HepG2 (cell line): ENCODE measurements at regions of chr11 and their contacts with region 1.

Region 1: GRCh38 chr11:46006418-46007070 is 84.1 kb downstream of the LARGE2 start:
- DNase-seq: peak; percentile 71
- ATAC-seq: peak; percentile 84
- H3K4me3 ChIP-seq: no peak overlapping the region
- H3K27ac ChIP-seq: no peak overlapping the region
- H3K4me1 ChIP-seq: no peaks in the 10 kb centered on the region
- H3K27me3 ChIP-seq: no peaks in the 10 kb centered on the region
- CTCF ChIP-seq: peak; percentile 81
- EP300 ChIP-seq: no peak; a peak in 1 of 4 replicates
- POLR2A ChIP-seq: no peak
- RAD21 ChIP-seq: peak; percentile 24; the same call in 1 of the 2 replicates

Region 2: DNA sequence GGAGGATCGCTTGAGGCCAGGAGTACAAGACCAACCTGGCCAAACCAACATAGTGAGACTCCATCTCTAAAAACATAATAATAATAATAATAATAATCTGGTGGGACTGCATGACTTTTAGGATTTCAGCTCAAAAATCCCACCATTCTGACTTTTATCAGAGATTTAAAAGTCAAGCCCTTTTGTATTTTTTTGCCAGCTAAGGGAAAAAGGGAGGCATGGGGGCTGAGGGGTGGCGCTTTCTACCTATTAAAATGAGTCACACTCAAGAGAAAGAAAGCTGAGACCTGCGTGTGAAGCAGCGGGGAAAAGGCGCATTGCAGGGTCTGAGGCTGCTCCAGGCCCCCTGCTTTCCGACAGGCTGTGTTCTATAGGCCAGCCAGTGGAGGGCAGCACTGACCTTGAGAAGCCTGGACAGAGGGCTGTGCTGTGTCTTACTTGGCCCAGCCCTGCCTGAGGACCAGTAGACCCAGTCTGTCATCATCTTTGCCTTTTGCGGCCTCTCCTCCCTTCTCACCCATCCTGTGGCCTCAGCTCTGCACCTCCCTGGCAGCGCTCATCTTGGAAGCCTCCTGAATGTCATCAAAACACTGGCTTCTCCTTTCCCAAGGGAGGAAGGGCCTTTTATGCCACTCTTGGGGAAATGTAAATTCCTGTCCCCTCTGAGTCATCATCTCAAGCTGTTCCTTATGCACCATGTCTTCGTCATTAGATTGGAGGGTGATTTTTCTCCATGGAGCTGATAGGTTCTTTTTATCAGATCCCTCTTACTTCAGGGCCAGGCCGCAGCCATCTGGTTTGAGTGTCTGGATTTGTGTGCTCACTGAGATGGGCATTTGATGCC is 133.8 kb before region 1 on chr11:
- CTCF ChIA-PET with region 1: interaction called, 5 read pairs
- POLR2A ChIA-PET with region 1: no interaction called
- in situ Hi-C with region 1: no loop called
- intact Hi-C with region 1: loop called (anchors 1 kb)
- DNase-seq: peak; percentile 29
- ATAC-seq: peak; percentile 90
- H3K4me3 ChIP-seq: no peak overlapping the region
- H3K27ac ChIP-seq: no peak overlapping the region
- H3K4me1 ChIP-seq: no peaks in the 10 kb centered on the region
- H3K27me3 ChIP-seq: no peaks in the 10 kb centered on the region
- CTCF ChIP-seq: peak; percentile 83
- EP300 ChIP-seq: no peak
- POLR2A ChIP-seq: no peak
- RAD21 ChIP-seq: peak; percentile 69

Region 3: GRCh38 chr11:45964911-45965389 is 41.6 kb before region 1 on chr11:
- CTCF ChIA-PET with region 1: interaction called, 31 read pairs
- POLR2A ChIA-PET with region 1: no interaction called
- in situ Hi-C with region 1: no loop called
- intact Hi-C with region 1: loop called (anchors 1 kb)
- DNase-seq: peak; percentile 54
- ATAC-seq: peak; percentile 97
- H3K4me3 ChIP-seq: no peak overlapping the region
- H3K27ac ChIP-seq: no peak overlapping the region
- H3K4me1 ChIP-seq: no peaks in the 10 kb centered on the region
- H3K27me3 ChIP-seq: no peaks in the 10 kb centered on the region
- CTCF ChIP-seq: peak; percentile 88
- EP300 ChIP-seq: no peak
- POLR2A ChIP-seq: no peak
- RAD21 ChIP-seq: 0 out of 2 replicates have a peak, but pooled peaks have one; percentile 42